ENCODE measurements at regions of chr1 and their contacts with region 1.

Region 1: DNA sequence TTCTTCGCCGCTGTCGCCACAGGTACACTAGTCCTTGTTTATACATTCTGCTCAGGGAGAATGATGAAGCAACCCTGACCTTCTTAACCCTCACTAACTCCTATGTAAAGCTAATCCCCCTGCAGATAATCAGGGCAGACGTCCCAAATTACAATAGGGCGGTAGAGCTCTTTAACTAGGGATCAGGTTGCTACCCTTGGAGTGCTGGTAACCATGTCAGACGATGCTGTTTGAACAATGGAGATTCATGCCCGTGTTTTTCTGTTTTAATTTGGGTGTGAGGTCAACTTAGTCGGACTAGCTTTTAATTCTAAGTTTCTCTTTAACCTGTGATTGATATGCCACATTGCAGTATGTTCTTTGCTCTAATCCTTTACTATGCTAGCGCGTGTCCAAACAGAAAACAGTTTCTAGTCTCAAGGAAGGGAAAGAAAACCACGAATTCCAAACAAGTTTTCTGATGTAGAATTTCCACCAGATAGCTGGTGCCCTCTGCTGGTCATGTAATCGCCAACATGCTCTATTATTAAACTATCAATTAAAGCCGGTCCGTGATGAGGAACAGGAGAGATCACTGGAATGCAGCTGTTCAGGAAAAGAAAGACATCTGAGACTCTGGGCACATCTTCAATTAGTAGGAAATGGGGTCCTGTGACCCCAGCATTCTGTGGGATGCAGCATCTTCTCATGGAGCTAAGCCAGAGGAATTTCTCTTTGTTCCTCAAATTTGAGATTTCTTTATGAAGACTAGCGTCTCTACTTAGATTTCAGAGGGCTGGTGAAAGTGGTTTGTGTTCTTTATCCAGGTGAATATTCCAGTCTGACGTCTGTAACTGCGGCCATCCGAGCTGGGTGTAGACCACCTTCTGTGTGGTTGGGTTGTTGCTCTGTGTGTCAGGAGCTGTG is 18.3 kb upstream of the VAMP3 start:
- DNase-seq: no peak
- H3K4me3 Mint-ChIP-seq: no peak overlapping the region
- H3K27ac Mint-ChIP-seq: no peak overlapping the region
- H3K4me1 Mint-ChIP-seq: peaks cover 16% of the 10 kb centered on the region
- H3K27me3 Mint-ChIP-seq: peaks cover 12% of the 10 kb centered on the region

Region 2: DNA sequence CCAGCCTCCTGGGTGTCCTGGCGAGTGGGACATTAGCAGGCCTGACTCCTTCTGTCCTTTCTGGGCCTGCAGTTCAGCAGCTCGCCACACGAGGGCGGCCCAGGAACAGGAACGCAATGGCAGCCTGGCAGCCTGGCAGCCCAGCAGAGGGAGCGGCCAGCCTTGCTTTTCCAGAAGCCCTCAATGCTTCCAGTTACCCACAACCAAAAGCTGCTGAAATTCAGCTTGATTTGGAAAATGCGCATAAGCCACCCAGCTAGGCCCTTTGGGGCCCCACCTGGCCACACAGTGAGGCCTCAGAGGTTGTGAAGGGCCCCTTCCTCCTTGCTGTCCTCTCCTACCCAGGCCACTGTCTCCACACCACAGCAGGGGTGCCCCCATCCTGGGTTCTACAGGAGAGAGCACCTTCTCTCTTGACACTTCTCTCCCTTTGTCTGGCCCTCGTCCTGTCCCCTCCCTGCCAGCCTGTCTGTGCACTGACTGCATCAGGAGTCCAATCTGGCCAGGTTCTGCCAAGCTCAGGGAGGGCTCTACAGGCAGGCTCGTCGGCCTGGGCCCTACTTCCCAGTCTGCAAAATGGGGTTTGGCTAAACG is 85.0 kb before region 1 on chr1:
- intact Hi-C with region 1: loop called (anchors 1 kb)
- DNase-seq: peak; percentile 64
- H3K4me3 Mint-ChIP-seq: no peak overlapping the region
- H3K27ac Mint-ChIP-seq: no peak overlapping the region
- H3K4me1 Mint-ChIP-seq: no peaks in the 10 kb centered on the region
- H3K27me3 Mint-ChIP-seq: peaks cover 2% of the 10 kb centered on the region